CD14-positive monocyte (primary cell): ENCODE measurements at regions of chr12 and their contacts with region 1.

Region 1: GRCh38 chr12:10235761-10236631 is 23.3 kb downstream of the GABARAPL1 start:
- DNase-seq: peak; percentile 36 to 62 (median 52)
- H3K4me3 ChIP-seq: no peak overlapping the region
- H3K4me3 Mint-ChIP-seq: no peak overlapping the region
- H3K27ac ChIP-seq: no peak overlapping the region
- H3K27ac Mint-ChIP-seq: peak overlapping the region in 1 of 7 donors; percentile 3
- H3K4me1 ChIP-seq: no peaks in the 10 kb centered on the region
- H3K4me1 Mint-ChIP-seq: peaks cover 3% of the 10 kb centered on the region
- H3K27me3 ChIP-seq: no peaks in the 10 kb centered on the region
- H3K27me3 Mint-ChIP-seq: peaks cover 0 to 7% (median 3%) of the 10 kb centered on the region in 3 donors
- CTCF ChIP-seq: peak; percentile 93

Region 2: GRCh38 chr12:10140001-10140400 is 96.0 kb before region 1 on chr12:
- intact Hi-C with region 1: no loop called
- DNase-seq: peak; percentile 72 to 81 (median 75)
- H3K4me3 ChIP-seq: no peak overlapping the region
- H3K4me3 Mint-ChIP-seq: no peak overlapping the region
- H3K27ac ChIP-seq: no peak overlapping the region
- H3K27ac Mint-ChIP-seq: peak overlapping the region; percentile 5 to 73 (median 49)
- H3K4me1 ChIP-seq: peaks cover 6 to 7% of the 10 kb centered on the region in 2 donors
- H3K4me1 Mint-ChIP-seq: peaks cover 14% of the 10 kb centered on the region
- H3K27me3 ChIP-seq: no peaks in the 10 kb centered on the region
- H3K27me3 Mint-ChIP-seq: peaks cover 2 to 5% (median 3%) of the 10 kb centered on the region in 3 donors
- CTCF ChIP-seq: peak; percentile 82

Region 3: GRCh38 chr12:10190558-10191388 is 45.2 kb before region 1 on chr12:
- intact Hi-C with region 1: no loop called
- DNase-seq: peak; percentile 68 to 85 (median 77)
- H3K4me3 ChIP-seq: no peak overlapping the region
- H3K4me3 Mint-ChIP-seq: no peak overlapping the region
- H3K27ac ChIP-seq: no peak overlapping the region
- H3K27ac Mint-ChIP-seq: peak overlapping the region in 1 of 7 donors; percentile 73
- H3K4me1 ChIP-seq: peaks cover 16% of the 10 kb centered on the region in 2 donors
- H3K4me1 Mint-ChIP-seq: peaks cover 25% of the 10 kb centered on the region
- H3K27me3 ChIP-seq: peaks cover 0 to 6% of the 10 kb centered on the region in 2 donors
- H3K27me3 Mint-ChIP-seq: peaks cover 4 to 6% (median 5%) of the 10 kb centered on the region in 3 donors
- CTCF ChIP-seq: peak; percentile 87

Region 4: DNA sequence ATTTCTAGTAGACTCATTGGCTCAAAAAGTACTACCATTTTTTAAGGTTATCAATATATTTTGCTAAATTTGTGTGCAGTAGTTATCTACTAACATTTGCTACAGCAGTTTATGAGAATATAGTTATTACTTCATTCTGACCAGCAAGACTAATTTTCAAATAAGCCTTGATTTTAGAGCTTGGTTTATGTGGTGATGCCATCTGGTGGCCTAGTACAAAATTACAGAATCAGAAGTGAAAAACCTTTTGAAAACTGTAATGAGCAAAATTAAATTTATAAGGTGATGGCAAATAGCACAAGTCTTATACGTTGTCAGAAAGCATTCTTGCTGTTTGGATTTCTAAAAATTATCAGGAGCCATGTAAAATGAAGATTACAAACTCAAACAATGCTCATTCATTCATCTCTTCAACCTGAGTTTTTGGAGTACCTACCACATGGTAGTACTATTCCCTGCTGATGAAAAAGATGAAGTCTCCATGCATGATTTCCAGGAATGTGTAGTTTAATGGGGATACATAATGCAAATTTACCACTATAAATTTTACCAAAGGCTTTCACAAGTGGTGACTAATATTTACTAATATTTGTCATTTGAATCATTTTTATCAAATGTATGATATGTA is 326.4 kb after region 1 on chr12:
- intact Hi-C with region 1: loop called (anchors 5 kb)
- DNase-seq: peak; percentile 12 to 44 (median 41)
- H3K4me3 ChIP-seq: no peak overlapping the region
- H3K4me3 Mint-ChIP-seq: no peak overlapping the region
- H3K27ac ChIP-seq: no peak overlapping the region
- H3K27ac Mint-ChIP-seq: no peak overlapping the region
- H3K4me1 ChIP-seq: no peaks in the 10 kb centered on the region
- H3K4me1 Mint-ChIP-seq: peaks cover 2% of the 10 kb centered on the region
- H3K27me3 ChIP-seq: no peaks in the 10 kb centered on the region
- H3K27me3 Mint-ChIP-seq: peaks cover 0 to 3% (median 1%) of the 10 kb centered on the region in 3 donors
- CTCF ChIP-seq: peak; percentile 86

Region 5: GRCh38 chr12:10749700-10750384 is 513.8 kb after region 1 on chr12:
- intact Hi-C with region 1: loop called in 1 of 2 experiments (anchors 10 kb)
- DNase-seq: peak; percentile 71 to 89 (median 80)
- H3K4me3 ChIP-seq: peak overlapping the region; percentile 14 to 62 (median 18)
- H3K4me3 Mint-ChIP-seq: peak overlapping the region; percentile 72 to 88
- H3K27ac ChIP-seq: peak overlapping the region in 1 of 2 donors; percentile 24
- H3K27ac Mint-ChIP-seq: peak overlapping the region; percentile 16 to 81 (median 66)
- H3K4me1 ChIP-seq: peaks cover 5 to 6% of the 10 kb centered on the region in 2 donors
- H3K4me1 Mint-ChIP-seq: peaks cover 8% of the 10 kb centered on the region
- H3K27me3 ChIP-seq: no peaks in the 10 kb centered on the region
- H3K27me3 Mint-ChIP-seq: peaks cover 1 to 14% (median 2%) of the 10 kb centered on the region in 3 donors
- CTCF ChIP-seq: peak; percentile 85

Region 6: GRCh38 chr12:11486623-11487444 is 1250.8 kb after region 1 on chr12:
- intact Hi-C with region 1: loop called in 1 of 2 experiments (anchors 5 kb)
- DNase-seq: peak; percentile 83 to 90 (median 88)
- H3K4me3 ChIP-seq: no peak overlapping the region
- H3K4me3 Mint-ChIP-seq: no peak overlapping the region
- H3K27ac ChIP-seq: no peak overlapping the region
- H3K27ac Mint-ChIP-seq: no peak overlapping the region
- H3K4me1 ChIP-seq: peaks cover 0 to 2% of the 10 kb centered on the region in 2 donors
- H3K4me1 Mint-ChIP-seq: peaks cover 4% of the 10 kb centered on the region
- H3K27me3 ChIP-seq: no peaks in the 10 kb centered on the region
- H3K27me3 Mint-ChIP-seq: peaks cover 0 to 5% (median 0%) of the 10 kb centered on the region in 3 donors
- CTCF ChIP-seq: peak; percentile 99